Activated CD4-positive, alpha-beta T cell treated with anti-CD3 and anti-CD28 coated beads, Interleukin-2, amount 10 ng/mL, durations not matched to agents 24 days and 14 days (primary cell): ENCODE measurements at regions of chr11 and their contacts with region 1.

Region 1: DNA sequence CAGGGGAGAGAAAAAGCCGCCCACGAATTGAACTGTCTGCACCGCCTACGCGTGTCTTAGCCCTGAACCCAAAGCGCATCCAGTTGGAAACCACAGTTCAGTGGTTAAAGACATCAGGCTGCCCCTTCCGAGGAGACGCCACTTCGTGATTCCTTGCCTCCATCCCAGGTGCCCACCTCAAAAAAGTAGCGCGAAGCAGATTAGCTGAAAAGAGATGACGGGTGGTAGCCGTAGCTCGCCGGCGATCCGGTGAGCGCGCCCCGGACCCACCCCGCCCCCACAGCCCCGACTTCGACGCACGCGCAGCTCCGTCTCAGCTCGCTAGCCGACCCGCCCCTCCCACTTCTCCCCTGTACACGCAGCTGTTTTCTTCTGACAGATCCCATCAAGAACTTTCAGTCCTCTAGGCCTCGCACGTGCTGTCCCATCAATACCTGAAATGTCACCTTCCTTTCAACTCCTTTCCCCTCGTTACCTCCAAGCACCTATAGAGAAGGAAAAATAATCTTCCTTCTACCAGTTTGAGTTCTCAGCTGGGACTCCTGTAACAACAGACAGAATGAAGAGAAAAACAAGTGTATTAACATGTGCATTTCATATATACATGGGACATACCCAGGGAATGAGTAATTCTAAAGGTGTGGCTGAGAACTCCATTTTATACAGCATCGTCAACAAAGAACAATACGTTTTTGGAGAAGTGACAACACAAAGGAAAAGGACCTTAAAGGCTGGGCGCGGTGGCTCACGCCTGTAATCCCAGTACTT is 49.5 kb downstream of the OR4D9 start:
- DNase-seq: peak; percentile 90
- H3K4me3 Mint-ChIP-seq: peak overlapping the region; percentile 89
- H3K27ac Mint-ChIP-seq: peak overlapping the region; percentile 96
- H3K4me1 Mint-ChIP-seq: peaks cover 46% of the 10 kb centered on the region
- H3K27me3 Mint-ChIP-seq: peaks cover 6% of the 10 kb centered on the region

Region 2: GRCh38 chr11:59106363-59107336 is 454.2 kb before region 1 on chr11 and contains the start of gene FAM111B:
- intact Hi-C with region 1: loop called (anchors 5 kb)
- DNase-seq: peak; percentile 93
- H3K4me3 Mint-ChIP-seq: peak within 1 kb of the TSS; percentile 94
- H3K27ac Mint-ChIP-seq: peak within 1 kb of the TSS; percentile 85
- H3K4me1 Mint-ChIP-seq: peaks cover 66% of the 10 kb centered on the region
- H3K27me3 Mint-ChIP-seq: no peaks in the 10 kb centered on the region
- total RNA-seq, gene FAM111B: 68.4 and 70.1 TPM in 2 replicates

Region 3: GRCh38 chr11:59335001-59335400 is 225.9 kb before region 1 on chr11:
- intact Hi-C with region 1: no loop called
- DNase-seq: no peak
- H3K4me3 Mint-ChIP-seq: no peak overlapping the region
- H3K27ac Mint-ChIP-seq: no peak overlapping the region
- H3K4me1 Mint-ChIP-seq: no peaks in the 10 kb centered on the region
- H3K27me3 Mint-ChIP-seq: no peaks in the 10 kb centered on the region

Region 4: DNA sequence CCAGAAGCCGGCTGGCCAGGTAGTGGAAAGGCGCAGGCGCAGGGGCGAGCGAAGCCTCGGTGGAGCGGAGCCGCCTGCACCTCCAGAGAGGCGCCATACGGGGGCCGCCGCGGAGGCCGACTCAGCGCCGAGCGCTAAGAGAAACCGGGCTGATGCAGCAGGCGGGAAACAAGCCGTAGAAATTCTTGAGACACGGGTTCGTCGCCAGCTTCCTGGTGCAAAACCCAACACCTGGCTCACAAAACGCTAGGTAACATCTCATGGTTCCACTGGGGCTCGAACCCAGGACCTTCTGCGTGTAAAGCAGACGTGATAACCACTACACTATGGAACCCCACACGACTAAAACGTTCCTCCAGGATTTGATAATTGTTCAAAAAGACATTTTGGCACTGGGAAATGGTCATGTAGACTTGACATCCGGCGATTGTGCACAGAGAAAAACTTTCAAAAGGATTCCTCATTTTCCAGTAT is 10.5 kb before region 1 on chr11:
- intact Hi-C with region 1: loop called (anchors 1 kb)
- DNase-seq: peak; percentile 95
- H3K4me3 Mint-ChIP-seq: peak overlapping the region; percentile 85
- H3K27ac Mint-ChIP-seq: peak overlapping the region; percentile 88
- H3K4me1 Mint-ChIP-seq: peaks cover 22% of the 10 kb centered on the region
- H3K27me3 Mint-ChIP-seq: peaks cover 15% of the 10 kb centered on the region

Region 5: DNA sequence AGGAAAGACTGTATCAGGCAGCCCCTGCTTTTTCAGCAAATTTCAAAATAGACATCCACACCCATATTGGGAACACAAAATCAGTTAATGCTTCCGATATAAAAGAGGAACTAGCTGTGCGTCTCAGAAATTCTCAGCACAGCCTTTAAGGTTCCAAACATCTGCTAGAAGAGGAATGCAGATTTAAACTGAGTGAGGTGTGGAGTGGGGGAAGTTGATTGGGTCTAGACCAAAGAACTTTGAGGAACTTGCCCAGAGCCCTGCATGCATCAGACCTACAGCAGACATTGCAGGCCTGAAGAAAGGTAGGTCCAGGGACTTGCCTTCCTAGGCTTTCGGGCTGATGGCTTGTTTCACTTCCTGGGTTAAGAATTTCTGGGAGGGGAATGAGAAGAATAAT is 719.5 kb after region 1 on chr11 and contains the start of gene MS4A4A:
- intact Hi-C with region 1: no loop called
- DNase-seq: no peak
- H3K4me3 Mint-ChIP-seq: no peak within 1 kb of the TSS
- H3K27ac Mint-ChIP-seq: no peak within 1 kb of the TSS
- H3K4me1 Mint-ChIP-seq: no peaks in the 10 kb centered on the region
- H3K27me3 Mint-ChIP-seq: no peaks in the 10 kb centered on the region
- total RNA-seq, gene MS4A4A: not detected in 2 replicates